Activated B cell treated with CpG ODN at 0.5 μM for 24 hours (primary cell): ENCODE measurements at regions of chr16 and their contacts with region 1.

Region 1: GRCh38 chr16:74296432-74297144 is at the start of gene PSMD7:
- DNase-seq: peak; percentile 89
- ATAC-seq: peak; percentile 94
- H3K4me3 Mint-ChIP-seq: peak within 1 kb of the TSS; percentile 87
- H3K27ac Mint-ChIP-seq: peak within 1 kb of the TSS; percentile 90
- H3K4me1 Mint-ChIP-seq: peaks cover 33% of the 10 kb centered on the region
- H3K27me3 Mint-ChIP-seq: no peaks in the 10 kb centered on the region
- CTCF ChIP-seq: no peak
- total RNA-seq, gene PSMD7: 86.1 and 91.8 TPM in 2 replicates

Region 2: GRCh38 chr16:73058221-73058615 is 1238.4 kb before region 1 on chr16:
- CTCF ChIA-PET with region 1: no interaction called
- POLR2A ChIA-PET with region 1: no interaction called
- intact Hi-C with region 1: loop called (anchors 10 kb)
- DNase-seq: peak; percentile 55
- ATAC-seq: peak; percentile 70
- H3K4me3 Mint-ChIP-seq: peak overlapping the region; percentile 88
- H3K27ac Mint-ChIP-seq: no peak overlapping the region
- H3K4me1 Mint-ChIP-seq: peaks cover 22% of the 10 kb centered on the region
- H3K27me3 Mint-ChIP-seq: peaks cover 33% of the 10 kb centered on the region
- CTCF ChIP-seq: no peak

Region 3: GRCh38 chr16:73921295-73921694 is 375.3 kb before region 1 on chr16:
- CTCF ChIA-PET with region 1: no interaction called
- POLR2A ChIA-PET with region 1: no interaction called
- intact Hi-C with region 1: no loop called
- DNase-seq: no peak
- ATAC-seq: no peak
- H3K4me3 Mint-ChIP-seq: no peak overlapping the region
- H3K27ac Mint-ChIP-seq: no peak overlapping the region
- H3K4me1 Mint-ChIP-seq: no peaks in the 10 kb centered on the region
- H3K27me3 Mint-ChIP-seq: no peaks in the 10 kb centered on the region
- CTCF ChIP-seq: no peak

Region 4: GRCh38 chr16:74372953-74373846 is 76.6 kb after region 1 on chr16:
- CTCF ChIA-PET with region 1: no interaction called
- POLR2A ChIA-PET with region 1: interaction called, 3 read pairs
- intact Hi-C with region 1: loop called (anchors 1 kb)
- DNase-seq: no peak
- ATAC-seq: no peak
- H3K4me3 Mint-ChIP-seq: no peak overlapping the region
- H3K27ac Mint-ChIP-seq: no peak overlapping the region
- H3K4me1 Mint-ChIP-seq: peaks cover 1% of the 10 kb centered on the region
- H3K27me3 Mint-ChIP-seq: no peaks in the 10 kb centered on the region
- CTCF ChIP-seq: no peak

Region 5: DNA sequence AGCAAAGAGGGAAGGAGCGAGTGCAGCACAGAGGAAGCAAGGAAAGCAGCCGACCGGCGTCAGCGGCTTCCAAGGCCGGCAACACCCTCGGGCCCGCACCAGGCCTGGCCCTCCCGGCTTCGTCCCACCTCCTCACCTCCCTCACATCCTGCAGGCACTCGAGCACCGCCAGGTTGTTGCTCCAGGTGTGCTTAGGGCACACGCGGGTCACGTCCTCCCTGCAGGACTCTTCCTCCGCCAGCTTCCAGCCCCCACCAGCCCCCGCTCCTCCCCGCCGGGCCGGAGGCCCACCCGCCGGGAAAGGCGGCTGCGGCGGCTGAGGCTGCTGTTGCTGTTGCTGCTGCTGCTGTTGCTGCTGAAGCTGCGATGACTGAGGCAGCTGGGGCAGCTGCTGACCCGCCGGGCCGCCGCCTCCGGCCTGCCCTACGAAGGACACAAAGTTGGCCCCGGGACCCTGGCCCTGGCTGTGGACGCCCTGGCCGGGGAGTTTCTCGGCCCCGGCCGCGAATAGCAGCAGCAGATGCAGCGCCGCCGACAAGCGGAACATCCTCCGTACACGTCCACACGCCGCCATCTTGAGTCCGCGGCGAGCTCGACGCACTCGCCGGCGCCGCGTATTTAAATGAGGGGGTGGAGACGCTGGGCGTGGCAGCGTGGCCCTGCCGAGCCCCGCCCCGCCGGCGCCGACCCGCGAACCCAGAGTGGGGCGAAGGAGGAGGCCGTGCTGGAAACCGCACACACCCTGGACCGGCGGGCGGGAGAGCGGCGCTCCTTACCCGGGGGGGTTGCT is 310.1 kb after region 1 on chr16 and contains the start of gene GLG1:
- CTCF ChIA-PET with region 1: no interaction called
- POLR2A ChIA-PET with region 1: interaction called, 6 read pairs
- intact Hi-C with region 1: loop called (anchors 1 kb)
- DNase-seq: peak; percentile 94
- ATAC-seq: peak; percentile 96
- H3K4me3 Mint-ChIP-seq: peak within 1 kb of the TSS; percentile 94
- H3K27ac Mint-ChIP-seq: peak within 1 kb of the TSS; percentile 91
- H3K4me1 Mint-ChIP-seq: peaks cover 45% of the 10 kb centered on the region
- H3K27me3 Mint-ChIP-seq: no peaks in the 10 kb centered on the region
- CTCF ChIP-seq: no peak
- total RNA-seq, gene GLG1: 72.7 and 81.4 TPM in 2 replicates

Region 6: GRCh38 chr16:74626741-74627416 is 330.3 kb after region 1 on chr16:
- CTCF ChIA-PET with region 1: no interaction called
- POLR2A ChIA-PET with region 1: no interaction called
- intact Hi-C with region 1: no loop called
- DNase-seq: no peak
- ATAC-seq: peak; percentile 5
- H3K4me3 Mint-ChIP-seq: no peak overlapping the region
- H3K27ac Mint-ChIP-seq: peak overlapping the region; percentile 70
- H3K4me1 Mint-ChIP-seq: peaks cover 8% of the 10 kb centered on the region
- H3K27me3 Mint-ChIP-seq: no peaks in the 10 kb centered on the region
- CTCF ChIP-seq: no peak

Region 7: GRCh38 chr16:74666425-74667254 is 370.1 kb after region 1 on chr16 and contains the start of gene RFWD3:
- CTCF ChIA-PET with region 1: no interaction called
- POLR2A ChIA-PET with region 1: interaction called, 4 read pairs
- intact Hi-C with region 1: loop called (anchors 1 kb)
- DNase-seq: peak; percentile 78
- ATAC-seq: peak; percentile 99
- H3K4me3 Mint-ChIP-seq: peak within 1 kb of the TSS; percentile 94
- H3K27ac Mint-ChIP-seq: peak within 1 kb of the TSS; percentile 90
- H3K4me1 Mint-ChIP-seq: peaks cover 38% of the 10 kb centered on the region
- H3K27me3 Mint-ChIP-seq: no peaks in the 10 kb centered on the region
- CTCF ChIP-seq: no peak
- total RNA-seq, gene RFWD3: 57.9 and 63.2 TPM in 2 replicates

Region 8: DNA sequence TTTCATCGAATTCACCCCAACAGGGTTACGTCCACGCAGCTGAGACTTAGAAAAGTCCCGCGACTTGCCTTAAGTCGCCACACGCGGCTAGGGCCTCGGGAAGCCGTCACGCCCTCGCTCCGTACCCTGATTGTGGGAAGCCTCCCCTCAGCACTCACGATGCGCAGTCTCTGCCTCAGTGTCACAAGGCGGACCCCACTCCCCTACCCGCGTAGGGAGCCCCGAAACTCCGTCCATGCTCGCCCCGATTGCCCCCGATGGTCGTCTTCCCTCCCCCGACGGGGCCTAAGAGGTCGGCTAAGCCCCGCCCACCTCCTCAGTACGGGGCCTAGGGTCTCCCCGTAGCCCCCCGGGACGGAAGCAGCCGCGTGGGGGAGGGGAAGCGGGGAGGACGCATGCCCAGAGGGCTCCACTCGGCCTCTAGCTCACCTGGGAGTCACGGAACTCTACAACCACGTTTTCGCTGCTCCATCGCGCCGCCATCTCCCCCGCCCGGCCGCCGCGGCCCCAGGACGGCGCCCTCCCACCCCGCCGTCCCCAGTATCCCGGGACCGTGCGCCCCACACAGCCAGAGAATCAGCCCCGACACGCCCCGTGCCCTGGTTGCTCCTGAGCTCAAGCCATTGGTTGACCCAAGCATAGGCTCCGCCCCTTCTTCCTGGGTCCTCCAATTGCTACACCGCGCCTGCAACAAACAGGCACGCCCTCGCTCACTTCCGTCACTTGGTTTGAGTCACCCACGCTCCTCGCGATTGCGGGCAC is 688.1 kb after region 1 on chr16 and contains the start of gene WDR59:
- CTCF ChIA-PET with region 1: no interaction called
- POLR2A ChIA-PET with region 1: interaction called, 3 read pairs
- intact Hi-C with region 1: loop called (anchors 10 kb)
- DNase-seq: peak; percentile 90
- ATAC-seq: peak; percentile 99
- H3K4me3 Mint-ChIP-seq: peak within 1 kb of the TSS; percentile 96
- H3K27ac Mint-ChIP-seq: peak within 1 kb of the TSS; percentile 88
- H3K4me1 Mint-ChIP-seq: peaks cover 20% of the 10 kb centered on the region
- H3K27me3 Mint-ChIP-seq: no peaks in the 10 kb centered on the region
- CTCF ChIP-seq: no peak
- total RNA-seq, gene WDR59: 80.8 and 93.3 TPM in 2 replicates